Activated T-helper 1 cell treated with anti-CD3 and anti-CD28 coated beads, Interleukin-12 subunit alpha, Interleukin-12 subunit beta, Interleukin-2, Interleukin-4 antibody, amounts not matched to agents 30 ng/mL and 10 ng/mL and 1 ng/mL, durations not matched to agents 14 hours and 24 hours and 36 hours (primary cell): ENCODE measurements at regions of chr17 and their contacts with region 1.

Region 1: DNA sequence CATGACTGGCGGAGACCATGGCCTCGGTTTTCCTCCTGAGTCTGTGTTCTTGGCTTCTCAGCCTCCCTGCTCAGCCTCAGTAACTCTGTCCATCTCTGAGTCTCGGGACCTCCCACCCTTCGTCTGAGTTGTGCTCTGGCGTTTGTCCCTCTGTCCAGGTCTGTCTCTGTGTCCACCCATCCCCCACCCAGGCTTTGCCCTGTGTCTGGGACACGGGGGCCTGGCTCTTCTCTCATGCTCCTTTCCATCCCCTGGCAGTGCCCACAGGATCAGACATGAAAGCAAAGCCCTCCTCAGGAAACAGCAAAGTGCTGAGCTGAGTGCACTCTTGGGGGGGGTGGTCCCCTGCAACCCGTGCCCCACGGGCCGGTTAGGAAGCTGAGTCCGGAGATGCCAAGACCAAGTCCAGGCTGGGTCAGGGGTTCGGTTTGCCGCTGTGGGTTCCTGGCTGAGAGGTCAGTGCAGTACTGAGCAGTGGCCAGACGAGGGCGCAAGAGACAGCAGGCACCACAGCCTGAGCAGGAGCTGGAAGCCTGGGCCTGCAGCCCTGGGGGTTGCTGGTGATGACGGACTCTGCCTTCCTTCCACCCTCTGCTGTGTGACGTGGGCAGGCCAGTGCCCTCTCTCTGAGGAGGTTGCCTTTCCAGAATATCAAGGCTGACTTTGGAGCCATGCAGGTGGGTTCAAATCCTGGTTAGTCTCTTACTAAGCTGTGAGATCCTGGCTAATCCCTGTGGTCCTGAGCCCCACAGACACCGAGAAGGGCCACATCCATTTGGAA is 2.5 kb downstream of the P2RX1 start:
- DNase-seq: peak; percentile 68
- H3K4me3 Mint-ChIP-seq: no peak overlapping the region
- H3K27ac Mint-ChIP-seq: peak overlapping the region; percentile 16
- H3K4me1 Mint-ChIP-seq: peaks cover 38% of the 10 kb centered on the region
- H3K27me3 Mint-ChIP-seq: no peaks in the 10 kb centered on the region

Region 2: GRCh38 chr17:3845621-3846441 is 67.9 kb before region 1 on chr17 and contains the start of gene NCBP3:
- intact Hi-C with region 1: loop called (anchors 1 kb)
- DNase-seq: peak; percentile 90
- H3K4me3 Mint-ChIP-seq: peak within 1 kb of the TSS; percentile 97
- H3K27ac Mint-ChIP-seq: peak within 1 kb of the TSS; percentile 97
- H3K4me1 Mint-ChIP-seq: peaks cover 16% of the 10 kb centered on the region
- H3K27me3 Mint-ChIP-seq: peaks cover 9% of the 10 kb centered on the region
- total RNA-seq, gene NCBP3: 54.2 and 56.0 TPM in 2 replicates

Region 3: DNA sequence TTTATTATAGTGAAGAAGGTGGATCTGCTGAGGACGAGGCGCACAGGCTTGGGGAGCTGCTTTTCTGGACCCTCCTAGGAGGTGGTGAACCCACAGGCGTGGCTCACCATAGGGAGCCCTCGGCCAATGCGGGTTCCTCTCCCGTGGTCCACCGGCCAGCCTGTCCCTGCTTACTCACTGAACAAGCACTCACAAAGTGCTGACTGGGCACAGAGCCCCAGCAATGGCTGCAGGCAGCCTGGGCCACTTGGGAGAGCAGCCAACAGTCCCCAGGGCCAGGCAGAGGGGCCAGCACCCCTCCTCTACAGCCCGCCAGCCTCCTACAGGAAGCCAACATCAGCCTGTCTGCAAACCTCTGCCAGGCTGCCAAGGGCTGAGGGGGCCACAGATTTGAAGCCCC is 48.5 kb before region 1 on chr17:
- intact Hi-C with region 1: loop called (anchors 2 kb)
- DNase-seq: no peak
- H3K4me3 Mint-ChIP-seq: no peak overlapping the region
- H3K27ac Mint-ChIP-seq: no peak overlapping the region
- H3K4me1 Mint-ChIP-seq: no peaks in the 10 kb centered on the region
- H3K27me3 Mint-ChIP-seq: no peaks in the 10 kb centered on the region

Region 4: DNA sequence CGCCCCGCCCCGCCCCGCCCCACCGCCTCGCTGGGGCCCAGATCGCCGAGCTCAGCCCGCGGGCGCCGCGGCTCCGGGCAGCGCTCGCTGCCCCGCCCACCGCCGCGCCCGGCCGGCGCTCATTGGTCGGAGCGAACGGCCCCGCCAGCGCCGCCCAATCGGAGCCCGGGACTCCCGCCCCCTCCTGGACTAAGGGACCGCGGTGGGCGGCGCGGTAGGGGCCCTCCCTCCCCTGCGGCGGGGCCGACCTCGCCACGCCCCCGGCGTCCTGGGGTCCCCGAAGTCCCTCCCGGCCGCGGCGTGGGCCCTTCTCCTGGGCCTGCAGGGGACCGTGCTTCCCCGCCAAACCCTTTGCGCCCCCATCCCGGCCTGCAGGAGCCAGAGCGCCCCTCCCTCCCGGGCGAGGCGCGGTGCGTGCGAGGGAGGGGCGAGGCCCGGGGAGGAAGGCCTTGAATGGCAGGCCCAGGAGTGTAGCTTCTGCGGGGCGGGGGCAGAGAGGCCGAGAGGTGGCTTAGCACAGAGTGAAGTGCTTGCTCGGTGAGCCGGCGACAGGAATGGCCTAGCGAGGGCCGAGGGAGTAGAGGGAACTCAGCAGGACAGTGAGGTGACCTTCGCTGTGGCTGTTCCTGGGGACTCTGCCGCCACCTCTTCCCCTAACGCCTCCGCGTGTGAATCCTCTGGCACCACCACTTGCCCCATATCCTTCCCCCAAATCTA is 20.6 kb before region 1 on chr17 and contains the start of gene CAMKK1:
- intact Hi-C with region 1: loop called (anchors 1 kb)
- DNase-seq: peak; percentile 90
- H3K4me3 Mint-ChIP-seq: peak within 1 kb of the TSS; percentile 82
- H3K27ac Mint-ChIP-seq: peak within 1 kb of the TSS; percentile 86
- H3K4me1 Mint-ChIP-seq: peaks cover 30% of the 10 kb centered on the region
- H3K27me3 Mint-ChIP-seq: no peaks in the 10 kb centered on the region
- total RNA-seq, gene CAMKK1: 6.1 and 7.8 TPM in 2 replicates

Region 5: GRCh38 chr17:4004517-4005295 is 91.0 kb after region 1 on chr17:
- intact Hi-C with region 1: loop called (anchors 1 kb)
- DNase-seq: peak; percentile 32
- H3K4me3 Mint-ChIP-seq: no peak overlapping the region
- H3K27ac Mint-ChIP-seq: no peak overlapping the region
- H3K4me1 Mint-ChIP-seq: no peaks in the 10 kb centered on the region
- H3K27me3 Mint-ChIP-seq: no peaks in the 10 kb centered on the region

Region 6: GRCh38 chr17:4074831-4075495 is 161.2 kb after region 1 on chr17:
- intact Hi-C with region 1: loop called (anchors 1 kb)
- DNase-seq: no peak
- H3K4me3 Mint-ChIP-seq: no peak overlapping the region
- H3K27ac Mint-ChIP-seq: no peak overlapping the region
- H3K4me1 Mint-ChIP-seq: no peaks in the 10 kb centered on the region
- H3K27me3 Mint-ChIP-seq: no peaks in the 10 kb centered on the region